Activated CD8-positive, alpha-beta T cell treated with anti-CD3 and anti-CD28 coated beads for 36 hours (primary cell): ENCODE measurements at regions of chr2 and their contacts with region 1.

Region 1: GRCh38 chr2:231713730-231714430 is 5.6 kb downstream of the PTMA start:
- DNase-seq: peak; percentile 96
- ATAC-seq: peak; percentile 45
- H3K4me3 Mint-ChIP-seq: peak overlapping the region; percentile 55
- H3K27ac Mint-ChIP-seq: peak overlapping the region; percentile 94
- H3K4me1 Mint-ChIP-seq: peaks cover 35% of the 10 kb centered on the region
- H3K27me3 Mint-ChIP-seq: no peaks in the 10 kb centered on the region
- CTCF ChIP-seq: peak; percentile 93

Region 2: DNA sequence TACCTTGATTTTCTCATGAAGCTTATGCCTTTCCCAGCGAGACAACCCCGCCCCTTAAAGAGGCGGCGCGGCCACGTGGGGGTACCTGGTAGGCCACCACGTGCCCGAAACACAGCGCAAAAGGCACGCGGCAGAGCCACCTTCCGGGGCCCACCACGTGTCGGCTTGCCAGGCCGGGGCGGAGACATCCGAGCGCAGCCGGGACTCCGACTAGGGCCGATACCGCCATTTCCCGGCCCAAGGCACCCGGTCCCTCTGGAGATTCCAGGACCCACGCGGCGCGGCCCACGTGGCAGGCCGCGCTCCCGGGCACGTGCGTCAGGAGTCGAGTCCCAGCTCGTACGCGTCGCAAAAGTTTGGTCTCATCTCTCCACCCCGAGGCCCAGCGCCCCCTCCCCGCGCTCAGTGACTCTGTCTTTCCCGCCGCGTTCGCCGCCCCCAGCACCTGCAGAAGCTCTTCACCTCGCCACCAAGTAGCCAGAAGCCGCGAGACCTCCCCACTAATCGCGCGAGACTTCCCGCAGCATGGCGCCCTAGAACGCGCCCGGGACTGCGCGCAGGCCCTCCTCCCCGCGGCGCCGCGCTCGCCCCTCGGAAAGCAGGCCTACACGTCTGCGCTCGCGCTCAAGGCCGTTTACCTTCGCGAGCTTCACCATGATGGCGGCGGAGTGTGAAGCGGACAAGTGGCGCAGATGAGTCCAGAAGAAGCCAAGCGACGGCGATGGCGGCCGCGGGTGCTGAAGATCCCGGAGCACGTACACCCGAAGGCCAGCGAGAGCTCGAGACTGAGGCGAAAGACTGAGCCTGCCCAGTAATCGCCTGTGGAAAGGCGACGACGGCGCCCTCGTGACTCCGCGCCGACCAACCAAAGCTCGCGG is 249.9 kb before region 1 on chr2 and contains the start of gene NCL:
- CTCF ChIA-PET with region 1: interaction called, 3 read pairs
- POLR2A ChIA-PET with region 1: interaction called, 94 read pairs
- intact Hi-C with region 1: loop called (anchors 5 kb)
- DNase-seq: peak; percentile 89
- ATAC-seq: peak; percentile 47
- H3K4me3 Mint-ChIP-seq: peak within 1 kb of the TSS; percentile 100
- H3K27ac Mint-ChIP-seq: peak within 1 kb of the TSS; percentile 98
- H3K4me1 Mint-ChIP-seq: peaks cover 38% of the 10 kb centered on the region
- H3K27me3 Mint-ChIP-seq: no peaks in the 10 kb centered on the region
- CTCF ChIP-seq: no peak
- total RNA-seq, gene NCL: 1,312 to 1,361 TPM

Region 3: DNA sequence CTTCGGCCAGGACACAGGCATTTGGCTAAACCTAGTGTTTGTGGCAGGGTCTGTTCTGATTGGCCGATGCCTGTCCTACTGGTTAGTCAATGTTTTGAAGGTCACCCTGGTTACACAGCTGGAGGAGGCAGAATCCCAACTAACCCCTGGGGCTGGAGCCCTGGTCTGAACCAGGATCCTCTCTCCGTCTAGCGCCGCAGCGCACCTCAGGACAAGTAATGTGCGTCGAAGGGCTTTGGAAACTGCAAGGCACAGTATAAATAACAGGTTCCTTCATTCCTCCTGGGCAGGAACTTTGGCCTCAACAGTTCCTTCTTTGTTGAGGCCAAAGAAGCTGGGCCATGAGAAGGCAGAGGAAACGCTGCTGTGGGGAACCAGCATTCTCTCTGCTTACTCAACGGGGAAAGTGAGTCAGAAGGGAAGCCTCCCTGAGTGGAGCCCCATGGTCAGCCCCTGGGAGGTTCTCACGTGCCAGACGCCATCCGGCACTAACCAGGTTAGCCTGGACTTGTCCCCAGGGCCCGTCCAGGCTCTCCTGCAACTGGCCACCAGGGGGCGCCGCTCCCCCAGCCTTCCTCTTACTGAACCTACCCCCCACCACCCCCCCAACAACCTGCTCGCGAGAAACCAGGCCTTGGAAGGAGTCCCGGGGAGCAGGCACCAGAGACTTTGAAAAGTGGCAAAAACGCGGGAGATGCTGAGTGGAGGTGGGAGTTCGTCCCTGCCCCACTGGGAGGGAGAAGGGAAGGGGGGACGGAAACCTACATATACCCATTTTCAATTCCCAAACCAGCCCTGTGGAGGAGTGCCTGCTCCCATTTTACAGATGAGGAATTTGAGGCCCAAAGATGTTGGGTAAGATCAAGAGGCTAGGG is 101.5 kb before region 1 on chr2:
- CTCF ChIA-PET with region 1: interaction called, 165 read pairs
- POLR2A ChIA-PET with region 1: interaction called, 166 read pairs
- intact Hi-C with region 1: loop called (anchors 2 kb)
- DNase-seq: peak; percentile 99
- ATAC-seq: peak; percentile 55
- H3K4me3 Mint-ChIP-seq: peak overlapping the region; percentile 87
- H3K27ac Mint-ChIP-seq: peak overlapping the region; percentile 97
- H3K4me1 Mint-ChIP-seq: peaks cover 46% of the 10 kb centered on the region
- H3K27me3 Mint-ChIP-seq: no peaks in the 10 kb centered on the region
- CTCF ChIP-seq: peak; percentile 71

Region 4: GRCh38 chr2:231674587-231675338 is 39.1 kb before region 1 on chr2:
- CTCF ChIA-PET with region 1: interaction called, 385 read pairs
- POLR2A ChIA-PET with region 1: interaction called, 81 read pairs
- intact Hi-C with region 1: loop called (anchors 1 kb)
- DNase-seq: peak; percentile 77
- ATAC-seq: peak; percentile 85
- H3K4me3 Mint-ChIP-seq: peak overlapping the region; percentile 16
- H3K27ac Mint-ChIP-seq: no peak overlapping the region
- H3K4me1 Mint-ChIP-seq: peaks cover 12% of the 10 kb centered on the region
- H3K27me3 Mint-ChIP-seq: no peaks in the 10 kb centered on the region
- CTCF ChIP-seq: peak; percentile 92

Region 5: GRCh38 chr2:231687133-231687852 is 26.6 kb before region 1 on chr2:
- CTCF ChIA-PET with region 1: interaction called, 176 read pairs
- POLR2A ChIA-PET with region 1: interaction called, 55 read pairs
- intact Hi-C with region 1: no loop called
- DNase-seq: peak; percentile 79
- ATAC-seq: peak; percentile 93
- H3K4me3 Mint-ChIP-seq: peak overlapping the region; percentile 1
- H3K27ac Mint-ChIP-seq: no peak overlapping the region
- H3K4me1 Mint-ChIP-seq: peaks cover 8% of the 10 kb centered on the region
- H3K27me3 Mint-ChIP-seq: peaks cover 7% of the 10 kb centered on the region
- CTCF ChIP-seq: peak; percentile 71

Region 6: DNA sequence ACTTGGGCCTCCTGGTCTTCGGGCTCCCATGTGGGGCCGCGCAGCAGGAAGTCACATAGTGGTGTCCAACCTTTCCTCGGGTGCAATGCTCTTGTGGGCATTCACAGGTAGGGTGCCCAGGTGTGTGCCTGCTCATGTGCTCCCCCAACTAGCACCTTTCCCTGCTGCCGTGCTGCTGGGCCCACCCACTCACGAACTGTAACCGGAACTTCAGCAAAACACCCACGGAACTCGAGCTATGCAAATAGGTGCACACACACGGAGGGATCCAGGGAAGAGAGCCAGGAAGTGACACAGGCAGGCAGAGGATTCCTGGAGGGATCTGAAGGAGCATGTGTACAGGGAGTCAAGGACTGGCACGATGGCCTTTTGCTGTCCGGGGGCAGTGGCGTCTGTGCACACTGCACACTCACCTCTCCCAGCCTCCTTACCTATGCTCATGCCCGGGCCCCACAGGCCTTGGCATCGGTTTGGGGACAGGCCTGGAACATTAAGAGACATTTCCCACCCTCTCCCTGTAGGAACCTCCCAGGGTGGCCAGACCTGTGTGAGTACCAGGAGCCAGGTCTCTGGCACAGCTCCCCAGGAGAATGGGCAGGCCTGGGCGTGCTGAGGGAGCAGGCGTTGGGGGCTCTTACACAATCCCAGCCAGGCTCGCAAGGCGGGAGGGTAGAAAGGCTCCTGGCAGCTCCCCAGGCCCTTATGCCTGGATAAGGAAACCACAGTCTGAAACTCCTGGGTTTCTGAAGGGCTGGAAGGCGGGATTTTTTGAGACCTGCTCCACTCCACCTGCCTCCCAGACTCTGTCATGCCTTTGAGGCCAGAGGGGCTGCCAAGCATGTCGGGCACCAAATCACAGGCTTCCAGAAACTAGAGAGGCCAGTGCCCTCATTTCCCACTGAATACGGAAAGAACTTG is 12.2 kb before region 1 on chr2:
- CTCF ChIA-PET with region 1: interaction called, 55 read pairs
- POLR2A ChIA-PET with region 1: interaction called, 15 read pairs
- intact Hi-C with region 1: no loop called
- DNase-seq: no peak
- ATAC-seq: no peak
- H3K4me3 Mint-ChIP-seq: no peak overlapping the region
- H3K27ac Mint-ChIP-seq: no peak overlapping the region
- H3K4me1 Mint-ChIP-seq: peaks cover 14% of the 10 kb centered on the region
- H3K27me3 Mint-ChIP-seq: no peaks in the 10 kb centered on the region
- CTCF ChIP-seq: no peak

Region 7: GRCh38 chr2:231732604-231733003 is 18.7 kb after region 1 on chr2:
- CTCF ChIA-PET with region 1: interaction called, 14 read pairs
- POLR2A ChIA-PET with region 1: no interaction called
- intact Hi-C with region 1: no loop called
- DNase-seq: no peak
- ATAC-seq: no peak
- H3K4me3 Mint-ChIP-seq: no peak overlapping the region
- H3K27ac Mint-ChIP-seq: no peak overlapping the region
- H3K4me1 Mint-ChIP-seq: no peaks in the 10 kb centered on the region
- H3K27me3 Mint-ChIP-seq: no peaks in the 10 kb centered on the region
- CTCF ChIP-seq: no peak

Region 8: DNA sequence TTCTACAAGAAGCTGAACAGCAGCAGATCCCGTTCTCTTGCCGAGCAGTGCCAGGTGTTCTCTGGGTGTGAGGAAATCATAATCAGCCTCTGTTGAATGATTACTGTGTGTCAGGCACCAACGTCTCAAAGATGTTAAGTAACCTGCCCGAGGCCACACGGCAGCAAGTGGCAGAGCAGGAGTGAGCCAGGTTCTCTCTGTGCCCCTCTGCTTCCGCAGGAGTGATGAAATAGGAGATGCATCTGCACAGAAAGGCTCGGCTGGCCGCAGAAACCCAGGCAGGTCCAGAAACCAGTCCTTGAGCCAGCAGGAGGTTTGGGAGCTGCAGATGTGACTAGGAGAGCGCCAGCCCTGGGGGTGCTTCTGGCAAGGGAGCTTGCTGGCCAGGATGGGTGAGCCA is 140.8 kb after region 1 on chr2:
- CTCF ChIA-PET with region 1: no interaction called
- POLR2A ChIA-PET with region 1: no interaction called
- intact Hi-C with region 1: no loop called
- DNase-seq: no peak
- ATAC-seq: no peak
- H3K4me3 Mint-ChIP-seq: no peak overlapping the region
- H3K27ac Mint-ChIP-seq: no peak overlapping the region
- H3K4me1 Mint-ChIP-seq: no peaks in the 10 kb centered on the region
- H3K27me3 Mint-ChIP-seq: peaks cover 10% of the 10 kb centered on the region
- CTCF ChIP-seq: no peak